Activated T-helper 2 cell treated with anti-CD3 and anti-CD28 coated beads, Interferon-gamma antibody, Interleukin-2, Interleukin-4, amounts not matched to agents 10 μg/mL and 5 μg/mL and 100 μg/mL, durations not matched to agents 14 hours and 24 hours and 36 hours (primary cell): ENCODE measurements at regions of chr11 and their contacts with region 1.

Region 1: GRCh38 chr11:122781378-122782195 is 56.7 kb upstream of the CRTAM start:
- DNase-seq: peak; percentile 52
- H3K4me3 Mint-ChIP-seq: no peak overlapping the region
- H3K27ac Mint-ChIP-seq: no peak overlapping the region
- H3K4me1 Mint-ChIP-seq: peaks cover 6% of the 10 kb centered on the region
- H3K27me3 Mint-ChIP-seq: no peaks in the 10 kb centered on the region

Region 2: DNA sequence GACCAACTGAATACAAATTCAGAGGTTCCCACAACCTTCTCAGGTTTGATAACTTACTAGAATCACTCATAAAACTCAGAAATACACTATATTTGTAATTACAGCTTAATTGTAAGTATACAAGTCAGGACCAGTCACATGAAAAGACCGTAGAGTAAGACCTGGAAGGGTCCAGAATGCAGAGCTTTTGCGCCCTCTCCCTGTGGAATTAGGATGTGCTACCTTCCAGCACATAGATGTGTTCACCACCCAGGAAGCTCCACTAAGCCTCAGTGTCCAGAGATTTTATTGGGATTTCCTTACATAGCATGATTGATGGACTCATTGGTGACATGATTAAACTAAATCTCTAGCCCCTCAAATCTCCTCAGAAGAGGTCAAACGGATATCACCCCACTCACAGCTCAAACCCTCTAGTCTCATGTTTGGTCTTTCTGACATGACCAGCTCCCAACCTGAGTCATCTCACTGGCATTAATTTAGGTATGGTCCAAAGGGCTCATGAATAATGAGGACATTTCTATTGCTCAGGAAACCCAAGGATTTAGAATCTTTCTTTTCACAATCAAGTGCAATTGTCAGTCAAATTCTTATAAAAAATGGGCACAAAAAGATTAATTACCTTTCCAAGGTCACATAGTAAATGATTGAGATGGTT is 203.3 kb before region 1 on chr11:
- intact Hi-C with region 1: loop called (anchors 1 kb)
- DNase-seq: no peak
- H3K4me3 Mint-ChIP-seq: no peak overlapping the region
- H3K27ac Mint-ChIP-seq: no peak overlapping the region
- H3K4me1 Mint-ChIP-seq: peaks cover 11% of the 10 kb centered on the region
- H3K27me3 Mint-ChIP-seq: no peaks in the 10 kb centered on the region

Region 3: GRCh38 chr11:122749005-122749687 is 32.4 kb before region 1 on chr11:
- intact Hi-C with region 1: loop called (anchors 2 kb)
- DNase-seq: peak; percentile 59
- H3K4me3 Mint-ChIP-seq: no peak overlapping the region
- H3K27ac Mint-ChIP-seq: no peak overlapping the region
- H3K4me1 Mint-ChIP-seq: peaks cover 64% of the 10 kb centered on the region
- H3K27me3 Mint-ChIP-seq: peaks cover 5% of the 10 kb centered on the region